ENCODE measurements at regions of chr16 and their contacts with region 1.

Region 1: GRCh38 chr16:3754081-3754703 is 36.9 kb upstream of the TRAP1 start:
- DNase-seq: no peak
- H3K4me3 Mint-ChIP-seq: no peak overlapping the region
- H3K27ac Mint-ChIP-seq: no peak overlapping the region
- H3K4me1 Mint-ChIP-seq: no peaks in the 10 kb centered on the region
- H3K27me3 Mint-ChIP-seq: no peaks in the 10 kb centered on the region
- CTCF ChIP-seq: no peak

Region 2: DNA sequence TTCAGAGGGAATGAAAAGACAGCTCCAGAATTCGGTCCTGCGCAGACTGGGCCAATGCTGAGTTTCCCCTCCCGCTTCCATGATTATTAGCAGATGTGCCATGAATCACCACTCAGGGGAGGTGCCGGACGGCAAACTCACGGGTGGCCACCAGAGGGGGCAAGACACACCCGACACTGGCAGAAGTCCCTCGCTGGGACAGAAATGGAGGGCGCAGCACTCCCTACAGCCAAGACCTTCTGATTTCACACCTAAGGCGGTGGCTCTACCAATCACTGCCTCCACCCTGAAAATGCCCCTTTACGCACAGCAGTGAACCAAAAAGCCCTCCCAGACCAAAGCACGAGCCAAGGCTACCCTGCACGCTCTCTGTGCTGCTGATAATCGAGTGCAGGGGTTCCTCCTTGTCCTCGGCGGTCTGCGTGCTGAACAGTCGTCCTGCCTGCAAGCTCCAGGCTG is 63.7 kb before region 1 on chr16:
- CTCF ChIA-PET with region 1: no interaction called
- intact Hi-C with region 1: loop called (anchors 10 kb)
- DNase-seq: peak; percentile 92
- H3K4me3 Mint-ChIP-seq: no peak overlapping the region
- H3K27ac Mint-ChIP-seq: no peak overlapping the region
- H3K4me1 Mint-ChIP-seq: peaks cover 19% of the 10 kb centered on the region
- H3K27me3 Mint-ChIP-seq: no peaks in the 10 kb centered on the region
- CTCF ChIP-seq: peak; percentile 94

Measured in Calu3 (cell line).